Sciatic nerve (tissue), 2 donors: ENCODE measurements at regions of chr17 and their contacts with region 1.

Region 1: GRCh38 chr17:7632492-7632894 is 2.6 kb downstream of the SHBG start:
- DNase-seq: no peak
- ATAC-seq: no peak

Region 2: DNA sequence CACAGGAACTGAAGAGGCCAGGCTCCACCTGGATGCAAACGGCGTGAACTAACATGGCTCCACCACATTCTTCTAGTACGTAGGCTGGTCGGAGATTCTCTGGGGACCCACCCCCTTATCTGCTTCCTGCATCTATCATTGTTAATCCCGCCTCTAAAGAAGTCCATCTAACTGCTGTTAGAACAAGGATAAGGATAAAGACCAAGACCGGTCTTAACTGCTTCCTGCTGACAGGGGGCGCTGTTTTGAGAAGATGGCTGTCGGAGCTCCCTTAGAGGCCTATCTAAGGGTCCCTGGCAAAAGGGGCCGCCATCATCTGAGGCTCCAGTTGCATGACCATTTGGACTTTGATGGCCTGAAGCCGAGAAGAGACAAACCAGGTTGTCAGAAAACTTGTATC is 109.5 kb before region 1 on chr17:
- intact Hi-C with region 1: no loop called
- DNase-seq: no peak
- ATAC-seq: no peak

Region 3: DNA sequence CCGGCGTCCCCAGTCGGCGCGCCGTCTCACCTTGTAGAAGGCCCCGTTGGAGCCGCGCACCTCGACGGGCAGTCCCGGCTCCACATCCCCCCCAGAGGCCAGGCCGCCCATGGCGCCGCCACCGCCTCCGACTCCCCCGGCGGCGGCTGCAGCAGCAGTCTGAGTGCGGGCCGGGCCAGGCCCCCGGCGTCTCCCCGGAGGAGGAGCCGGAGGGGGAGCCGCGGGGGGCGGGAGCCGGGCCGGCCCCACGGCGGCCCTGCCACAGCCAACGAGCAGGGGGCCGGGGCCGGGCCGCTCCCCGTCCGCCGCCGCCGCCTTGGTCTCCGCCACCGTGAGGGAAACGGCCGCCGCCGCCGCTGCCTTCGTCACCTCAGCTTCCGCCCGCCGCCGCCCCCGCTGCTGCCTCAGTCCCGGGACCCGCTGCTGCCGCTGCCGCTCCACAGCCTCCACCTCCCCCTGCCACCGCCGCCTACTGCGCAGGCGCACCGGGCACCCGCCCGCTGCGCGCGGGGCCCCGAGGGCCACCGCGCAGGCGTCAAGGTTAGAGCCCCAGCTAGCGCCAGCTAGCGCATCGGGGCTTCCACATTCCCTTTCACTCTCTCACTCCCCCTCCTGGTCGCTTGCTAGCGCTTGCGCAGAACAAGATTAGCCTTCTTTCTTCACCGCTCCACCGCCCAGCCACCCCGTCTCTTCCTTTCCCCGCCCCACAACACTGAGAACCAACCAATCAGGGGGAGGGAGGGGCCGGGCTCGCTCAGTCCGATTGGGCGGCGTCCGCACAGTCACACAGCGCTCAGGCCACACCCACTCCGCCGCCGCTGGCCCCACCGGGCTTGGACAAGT is 17.9 kb before region 1 on chr17 and contains the start of gene FXR2:
- intact Hi-C with region 1: no loop called
- DNase-seq: peak; percentile 99
- ATAC-seq: peak; percentile 99
- total RNA-seq, gene FXR2: 46.5 TPM

Region 4: GRCh38 chr17:7687908-7688807 is 55.7 kb after region 1 on chr17 and contains the start of gene WRAP53:
- intact Hi-C with region 1: loop called (anchors 10 kb)
- DNase-seq: peak; percentile 97
- ATAC-seq: peak; percentile 95
- total RNA-seq, gene WRAP53: 5.7 TPM

Region 5: GRCh38 chr17:7782237-7782636 is 149.7 kb after region 1 on chr17:
- intact Hi-C with region 1: no loop called
- DNase-seq: no peak
- ATAC-seq: no peak